Esophagus squamous epithelium (tissue), 5 donors: ENCODE measurements at regions of chr3 and their contacts with region 1.

Region 1: GRCh38 chr3:49903451-49904424 is at the start of gene MST1R:
- DNase-seq: peak; percentile 12
- H3K4me3 ChIP-seq: peak within 1 kb of the TSS; percentile 28 to 63 (median 50)
- H3K27ac ChIP-seq: peak within 1 kb of the TSS; percentile 84 to 91 (median 88)
- H3K4me1 ChIP-seq: peaks cover 48 to 80% (median 49%) of the 10 kb centered on the region in 3 donors
- H3K27me3 ChIP-seq: no peaks in the 10 kb centered on the region
- CTCF ChIP-seq: peak in 3 of 6 experiments; percentile 8 to 24 (median 15)
- POLR2A ChIP-seq: peak in 3 of 4 donors; percentile 55 to 79 (median 65)
- total RNA-seq, gene MST1R: 5.4 to 26.5 (median 14.5) TPM

Region 2: GRCh38 chr3:49802719-49803464 is 100.8 kb before region 1 on chr3 and contains the start of gene INKA1:
- intact Hi-C with region 1: loop called (anchors 5 kb)
- DNase-seq: peak; percentile 69
- H3K4me3 ChIP-seq: peak within 1 kb of the TSS; percentile 87 to 93 (median 90)
- H3K27ac ChIP-seq: peak within 1 kb of the TSS; percentile 96 to 98 (median 97)
- H3K4me1 ChIP-seq: peaks cover 49 to 67% (median 52%) of the 10 kb centered on the region in 3 donors
- H3K27me3 ChIP-seq: peaks cover 0 to 2% (median 0%) of the 10 kb centered on the region in 4 donors
- CTCF ChIP-seq: peak; percentile 89 to 95 (median 92)
- POLR2A ChIP-seq: peak in 2 of 4 donors; percentile 80 to 81
- total RNA-seq, gene INKA1: 15.2 to 23.3 (median 19.9) TPM